OCI-LY7 (cell line): ENCODE measurements at regions of chr18 and their contacts with region 1.

Region 1: GRCh38 chr18:3585656-3586509 is 135.9 kb downstream of the TGIF1 start:
- DNase-seq: peak; percentile 93
- H3K4me3 ChIP-seq: peak overlapping the region; percentile 63
- H3K27ac ChIP-seq: peak overlapping the region; percentile 99
- H3K4me1 ChIP-seq: peaks cover 73% of the 10 kb centered on the region
- CTCF ChIP-seq: peak; percentile 98

Region 2: DNA sequence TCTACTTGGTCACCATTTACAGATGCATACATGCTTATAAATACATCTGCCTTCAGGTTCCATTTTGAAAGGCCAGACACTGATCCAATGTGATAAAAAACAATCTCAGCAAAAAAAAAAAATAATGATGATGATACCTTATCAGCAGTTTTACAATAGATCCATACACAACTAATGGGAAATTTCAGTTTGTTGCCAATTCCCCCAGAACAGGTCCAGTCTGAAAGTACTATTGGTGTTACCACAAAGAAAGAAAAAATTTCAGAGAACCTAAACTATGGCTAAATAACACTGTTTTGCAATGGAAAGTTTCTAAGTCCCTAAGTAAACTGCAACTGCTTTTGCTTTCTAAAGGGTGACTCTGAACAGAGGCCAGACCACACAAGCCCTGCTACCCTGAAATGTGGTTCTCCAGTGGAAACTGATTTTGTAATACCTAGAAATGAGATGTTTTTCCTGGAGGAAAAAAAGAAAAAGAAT is 627.0 kb before region 1 on chr18:
- CTCF ChIA-PET with region 1: no interaction called
- POLR2A ChIA-PET with region 1: no interaction called
- intact Hi-C with region 1: loop called (anchors 5 kb)
- DNase-seq: peak; percentile 41
- H3K4me3 ChIP-seq: peak overlapping the region; percentile 62
- H3K27ac ChIP-seq: peak overlapping the region; percentile 93
- H3K4me1 ChIP-seq: peaks cover 74% of the 10 kb centered on the region
- CTCF ChIP-seq: no peak

Region 3: DNA sequence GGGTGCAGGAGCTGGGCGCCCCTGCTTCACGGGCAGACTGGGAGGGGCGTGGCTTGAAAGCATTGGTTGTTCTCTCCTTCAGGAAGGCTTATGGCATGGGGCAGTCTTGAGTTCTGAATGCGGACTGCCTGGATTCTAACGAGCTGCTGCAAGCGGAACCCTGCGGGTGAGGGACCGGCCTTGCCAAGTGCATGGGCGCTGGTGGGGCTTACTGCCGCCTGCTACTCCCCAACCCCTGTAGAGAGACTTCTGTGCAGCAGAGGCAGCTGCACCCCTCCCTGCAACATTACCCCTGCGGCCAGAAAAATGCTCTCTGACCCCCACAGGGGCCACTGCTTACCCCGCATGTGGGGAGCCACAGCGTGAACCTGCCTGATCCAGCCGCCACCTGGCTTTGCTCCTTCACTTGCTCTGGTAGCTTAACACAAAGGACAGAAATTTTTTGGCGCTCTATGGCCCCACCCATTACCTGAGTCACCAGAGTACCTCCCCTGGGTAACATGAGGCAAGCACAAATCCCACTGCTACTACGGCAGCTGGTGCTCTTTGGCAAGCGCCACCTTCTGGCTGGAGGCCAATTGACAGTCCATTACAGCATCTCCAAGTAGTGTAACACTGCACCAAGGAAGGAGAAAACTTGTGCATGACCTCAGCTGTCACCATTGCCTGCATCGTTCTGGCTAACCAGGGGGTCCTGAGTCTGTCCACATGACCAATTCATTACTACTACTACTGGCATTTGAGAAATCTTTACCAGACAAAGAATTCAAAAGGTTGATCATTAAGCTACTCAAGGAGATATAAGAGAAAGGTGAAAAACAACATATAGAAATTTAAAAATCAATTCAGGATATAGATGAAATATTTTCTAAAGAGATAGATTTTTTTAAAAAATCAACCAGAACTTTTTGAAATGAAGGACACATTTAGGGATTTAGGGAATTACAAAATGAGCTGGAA is 288.6 kb before region 1 on chr18:
- CTCF ChIA-PET with region 1: interaction called, 5 read pairs
- POLR2A ChIA-PET with region 1: interaction called, 18 read pairs
- intact Hi-C with region 1: loop called (anchors 1 kb)
- DNase-seq: peak; percentile 97
- H3K4me3 ChIP-seq: peak overlapping the region; percentile 85
- H3K27ac ChIP-seq: peak overlapping the region; percentile 57
- H3K4me1 ChIP-seq: peaks cover 10% of the 10 kb centered on the region
- CTCF ChIP-seq: peak; percentile 98

Region 4: GRCh38 chr18:3447895-3448837 is 137.7 kb before region 1 on chr18:
- CTCF ChIA-PET with region 1: no interaction called
- POLR2A ChIA-PET with region 1: interaction called, 17 read pairs
- intact Hi-C with region 1: loop called (anchors 1 kb)
- DNase-seq: peak; percentile 88
- H3K4me3 ChIP-seq: peak overlapping the region; percentile 88
- H3K27ac ChIP-seq: peak overlapping the region; percentile 96
- H3K4me1 ChIP-seq: peaks cover 22% of the 10 kb centered on the region
- CTCF ChIP-seq: no peak

Region 5: DNA sequence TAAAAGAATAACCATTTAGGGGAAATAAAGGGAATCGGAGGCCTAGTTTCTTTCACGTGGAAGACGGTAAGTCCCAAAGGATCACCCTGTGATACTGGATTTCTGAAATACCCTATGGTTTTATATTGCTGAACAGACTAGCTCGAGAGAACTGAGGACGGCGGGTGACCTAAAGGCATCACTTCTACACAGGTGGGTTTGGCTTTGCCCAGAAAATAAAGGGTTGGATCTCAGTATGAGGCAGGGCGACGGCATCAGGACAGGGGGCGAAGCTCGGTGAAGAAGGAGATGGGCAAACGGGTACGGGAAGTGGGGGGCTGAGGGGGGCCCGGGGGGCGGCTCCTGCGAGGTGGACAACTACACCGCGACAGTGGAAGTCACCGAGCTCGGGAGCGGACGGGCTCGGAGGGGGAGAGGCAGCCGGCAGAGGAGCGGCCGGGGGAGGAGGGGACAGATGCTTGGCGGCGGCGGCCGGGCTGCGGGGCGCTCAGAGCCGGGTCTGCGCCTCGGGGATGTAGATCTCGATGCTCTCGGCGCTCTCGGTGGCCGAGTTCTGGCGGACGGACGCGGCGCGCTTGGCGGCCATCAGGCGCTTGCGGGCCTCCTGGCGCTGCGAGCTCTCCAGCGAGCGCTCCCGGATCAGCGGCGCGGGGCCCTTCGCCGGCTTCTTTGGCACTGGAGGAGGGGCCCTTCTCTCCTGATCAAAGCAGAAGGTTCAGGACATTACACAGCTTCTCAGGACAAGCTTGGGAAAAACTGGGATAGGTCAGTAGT is 87.0 kb before region 1 on chr18:
- CTCF ChIA-PET with region 1: interaction called, 3 read pairs
- POLR2A ChIA-PET with region 1: interaction called, 11 read pairs
- intact Hi-C with region 1: loop called (anchors 2 kb)
- DNase-seq: peak; percentile 70
- H3K4me3 ChIP-seq: peak overlapping the region; percentile 74
- H3K27ac ChIP-seq: peak overlapping the region; percentile 89
- H3K4me1 ChIP-seq: peaks cover 50% of the 10 kb centered on the region
- CTCF ChIP-seq: no peak

Region 6: DNA sequence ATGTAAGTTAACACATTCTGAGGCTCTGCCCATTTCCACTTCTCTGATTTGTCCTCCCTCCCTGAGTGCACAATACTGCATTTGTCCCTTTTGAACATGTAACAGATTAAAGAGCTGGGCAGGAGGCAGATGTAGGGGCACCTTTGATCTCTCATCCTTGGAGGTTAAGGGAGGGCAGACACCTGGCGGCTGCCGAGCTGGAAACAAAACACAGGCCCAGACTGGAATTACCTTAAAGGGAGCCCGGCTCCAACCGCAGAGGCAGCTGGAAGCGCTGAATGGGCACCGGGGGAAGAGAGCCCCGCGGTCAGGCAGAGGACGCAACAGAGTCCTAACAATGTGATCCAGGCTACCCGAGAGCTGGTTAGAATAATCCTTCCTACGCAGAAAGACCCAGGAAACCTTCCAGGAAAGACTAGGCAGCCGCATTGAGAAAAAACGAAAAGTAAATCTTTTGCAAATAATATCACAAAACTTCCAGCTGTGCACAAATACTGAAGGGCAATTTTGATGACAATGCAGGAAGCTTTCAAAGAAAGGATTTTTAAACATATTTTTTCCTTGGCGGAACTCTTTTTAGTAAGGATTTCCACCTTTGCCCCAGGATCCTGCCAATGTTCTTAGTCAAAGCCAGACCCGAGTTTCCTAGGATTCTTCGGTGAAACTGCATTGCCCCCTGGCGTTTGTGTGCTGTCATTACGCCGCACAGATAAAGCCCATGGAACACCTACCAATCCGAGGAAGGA is 80.1 kb after region 1 on chr18:
- CTCF ChIA-PET with region 1: interaction called, 3 read pairs
- POLR2A ChIA-PET with region 1: interaction called, 15 read pairs
- intact Hi-C with region 1: no loop called
- DNase-seq: peak; percentile 91
- H3K4me3 ChIP-seq: peak overlapping the region; percentile 58
- H3K27ac ChIP-seq: peak overlapping the region; percentile 78
- H3K4me1 ChIP-seq: peaks cover 52% of the 10 kb centered on the region
- CTCF ChIP-seq: peak; percentile 99